ENCODE measurements at regions of chr1 and their contacts with region 1.

Region 1: DNA sequence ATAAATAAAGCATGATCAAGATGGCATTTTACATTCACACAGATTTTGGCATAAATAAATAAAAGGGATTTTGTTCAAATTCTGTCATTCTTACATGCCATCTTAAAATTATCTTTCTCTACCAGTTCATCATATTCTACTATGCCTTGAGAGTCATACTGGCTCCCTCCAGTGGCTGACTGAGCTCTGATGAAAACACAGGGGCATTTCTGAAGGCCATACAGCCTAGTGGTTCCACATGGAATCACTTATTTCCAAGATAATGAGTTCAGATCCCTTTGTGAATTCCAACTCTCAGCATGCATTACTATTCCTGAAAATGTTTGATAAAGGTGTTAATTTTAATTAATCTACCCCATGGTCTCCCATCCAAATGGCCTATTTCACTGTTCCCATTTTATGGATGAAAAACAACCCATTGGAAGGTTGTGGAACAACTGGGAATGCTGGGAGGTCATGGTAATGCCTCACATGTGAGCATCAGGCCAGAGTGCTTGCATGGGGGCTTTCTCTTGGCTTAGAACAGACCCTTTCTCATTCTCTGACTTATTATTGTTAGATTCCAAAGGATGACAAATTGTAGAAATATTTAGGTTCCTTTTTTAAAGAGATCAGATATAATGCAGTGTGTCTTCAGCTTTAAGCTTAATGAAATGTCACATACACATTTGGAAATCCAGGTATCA is 622.4 kb upstream of the PKN2 start:
- DNase-seq: peak; percentile 61
- ATAC-seq: peak; percentile 81 to 89

Region 2: GRCh38 chr1:87131809-87132283 is 929.8 kb before region 1 on chr1:
- intact Hi-C with region 1: loop called in 1 of 2 experiments (anchors 10 kb)
- DNase-seq: peak; percentile 85
- ATAC-seq: peak; percentile 90

Region 3: DNA sequence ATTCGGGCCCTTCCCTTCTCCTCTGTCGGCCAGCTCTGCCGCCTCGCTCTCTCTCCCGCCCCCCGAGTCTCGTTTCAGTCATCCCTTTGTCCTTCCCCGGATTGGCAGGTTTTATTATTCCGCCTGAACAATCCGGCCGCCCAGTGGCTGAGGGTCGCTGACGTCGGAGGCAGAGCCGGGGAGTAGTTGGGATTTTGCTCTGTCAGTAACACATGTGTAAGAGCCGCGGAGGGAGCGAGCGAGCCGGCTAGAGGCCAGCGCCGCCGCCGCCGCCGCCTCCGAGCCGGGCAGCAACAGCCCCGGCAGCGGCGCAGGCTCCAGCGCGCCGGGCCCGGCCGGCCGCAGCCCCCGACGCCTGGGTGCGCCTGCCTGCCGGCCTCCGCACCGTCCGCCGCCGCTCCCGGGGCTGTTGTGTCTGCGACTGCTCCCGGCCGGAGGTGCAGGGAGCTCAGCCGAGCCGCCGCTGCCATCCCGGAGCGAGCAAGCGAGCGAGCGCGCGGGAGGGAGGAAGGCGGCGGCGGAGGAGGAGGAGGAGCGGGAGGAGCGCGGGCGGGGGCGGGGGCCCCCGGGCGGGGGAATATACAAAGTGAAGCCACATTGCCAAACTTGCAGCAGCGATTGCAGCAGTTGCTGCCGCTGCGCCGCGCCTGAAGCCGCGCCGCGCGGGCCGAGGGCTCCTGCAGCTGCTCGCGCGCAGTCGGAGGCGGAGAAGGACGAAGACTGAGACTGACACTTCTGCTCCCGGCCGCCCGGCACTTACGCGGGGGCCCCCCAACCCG is 733.2 kb before region 1 on chr1 and contains the start of gene LMO4:
- intact Hi-C with region 1: loop called in 1 of 2 experiments (anchors 2 kb)
- DNase-seq: peak; percentile 97
- ATAC-seq: peak; percentile 85
- total RNA-seq, gene LMO4: 43.2 to 50.6 TPM

Measured in left cardiac atrium (tissue), 4 donors.